H1 (cell line): ENCODE measurements at regions of chr10 and their contacts with region 1.

Region 1: DNA sequence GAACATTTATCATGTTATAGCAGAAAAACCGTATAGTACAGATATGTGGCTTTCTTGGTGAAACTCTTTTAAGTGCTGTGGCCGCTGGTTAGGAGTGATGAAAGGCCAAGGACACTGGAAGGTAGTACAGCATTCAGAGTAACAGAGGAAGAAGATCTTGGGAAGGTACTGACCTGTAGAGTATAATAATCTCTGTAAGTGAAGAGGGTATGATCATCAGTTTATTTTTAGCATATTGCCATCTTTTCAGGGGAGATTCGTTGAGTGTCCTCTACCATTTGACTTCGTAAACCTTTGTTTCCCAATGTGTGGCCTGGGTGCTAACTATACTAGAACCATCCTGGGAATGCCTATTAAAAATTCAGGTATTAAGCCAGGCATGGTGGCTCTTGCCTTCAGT is 44.6 kb downstream of the WAC start:
- DNase-seq: no peak
- H3K4me3 ChIP-seq: no peak overlapping the region
- H3K27ac ChIP-seq: no peak overlapping the region
- H3K4me1 ChIP-seq: peaks cover 0 to 2% (median 0%) of the 10 kb centered on the region in 4 experiments; a peak in 2 of 7 replicates
- H3K27me3 ChIP-seq: no peaks in the 10 kb centered on the region
- CTCF ChIP-seq: no peak
- EP300 ChIP-seq: no peak
- POLR2A ChIP-seq: no peak
- RAD21 ChIP-seq: no peak

Region 2: DNA sequence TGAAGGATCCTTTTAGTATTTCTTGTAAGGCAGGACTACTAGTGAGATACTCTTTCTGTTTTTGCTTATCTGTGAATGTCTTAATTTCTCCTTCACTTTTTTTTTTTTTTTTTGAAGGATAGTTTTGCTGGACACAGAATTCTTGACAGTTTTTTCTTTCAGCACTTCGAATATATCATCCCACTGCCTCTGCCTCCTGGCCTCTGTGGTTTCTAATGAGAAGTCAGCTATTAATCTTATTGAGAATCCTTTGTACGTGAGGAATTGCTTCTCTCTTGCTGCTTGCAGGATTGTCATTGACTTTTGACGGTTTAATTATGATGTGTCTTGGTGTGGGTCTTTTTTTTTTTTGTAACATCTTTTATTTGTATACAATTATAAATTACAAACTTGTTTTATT is 57.2 kb before region 1 on chr10:
- CTCF ChIA-PET with region 1: no interaction called
- POLR2A ChIA-PET with region 1: no interaction called
- DNase-seq: no peak
- H3K4me3 ChIP-seq: no peak overlapping the region
- H3K27ac ChIP-seq: no peak overlapping the region
- H3K4me1 ChIP-seq: no peaks in the 10 kb centered on the region; a peak in 1 of 7 replicates
- H3K27me3 ChIP-seq: no peaks in the 10 kb centered on the region
- CTCF ChIP-seq: no peak
- EP300 ChIP-seq: no peak
- POLR2A ChIP-seq: no peak
- RAD21 ChIP-seq: no peak

Region 3: DNA sequence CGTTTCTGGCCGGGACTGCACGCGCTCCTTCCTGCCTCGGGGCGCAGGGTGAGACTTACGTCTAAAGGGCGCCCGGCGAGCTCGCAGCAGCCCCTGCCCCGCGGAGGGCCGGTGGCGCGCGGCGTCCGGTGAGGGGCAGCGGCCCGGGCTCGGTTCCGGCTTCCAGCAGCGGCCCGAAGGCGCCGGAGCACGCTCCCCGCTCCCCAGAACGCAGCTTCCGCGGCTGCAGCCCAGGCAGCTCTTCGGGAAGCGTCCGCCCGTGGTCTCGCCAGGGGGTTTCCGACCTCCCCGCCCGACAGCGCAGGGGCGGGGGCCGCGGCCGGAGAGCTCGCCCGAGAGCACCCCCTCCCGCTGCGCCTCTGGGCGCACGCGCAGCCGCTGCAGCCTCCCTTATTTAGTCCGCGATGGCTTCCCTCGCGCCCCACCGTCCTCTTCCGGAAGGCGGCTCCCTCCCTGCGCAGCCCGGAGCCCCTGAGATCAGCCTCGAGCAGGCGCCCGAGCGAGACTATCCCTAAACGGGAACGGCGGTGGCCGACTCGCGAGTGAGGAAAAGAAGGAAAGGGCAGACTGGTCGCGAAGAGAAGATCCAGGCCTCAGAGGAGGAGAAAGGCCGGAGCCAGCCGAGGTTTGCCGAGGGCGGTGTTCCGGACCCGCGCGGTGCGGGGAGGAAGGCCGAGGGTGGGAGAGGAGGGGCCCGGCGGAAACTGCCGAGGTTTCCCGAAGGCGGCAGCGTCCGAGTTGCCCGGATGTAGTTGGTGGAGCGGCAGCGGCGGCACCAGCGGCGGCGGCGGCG is 44.9 kb before region 1 on chr10 and contains the start of gene WAC:
- CTCF ChIA-PET with region 1: no interaction called
- POLR2A ChIA-PET with region 1: interaction called, 11 read pairs
- DNase-seq: peak; percentile 71 to 99
- H3K4me3 ChIP-seq: peak within 1 kb of the TSS; percentile 74 to 93 (median 82)
- H3K27ac ChIP-seq: peak within 1 kb of the TSS; percentile 99
- H3K4me1 ChIP-seq: no peaks in the 10 kb centered on the region; a peak in 1 of 7 replicates
- H3K27me3 ChIP-seq: no peaks in the 10 kb centered on the region
- CTCF ChIP-seq: no peak
- EP300 ChIP-seq: no peak
- POLR2A ChIP-seq: peak; percentile 85 to 86
- RAD21 ChIP-seq: no peak
- total RNA-seq, gene WAC: 122 and 128 TPM in 2 replicates